MCF 10A (cell line): ENCODE measurements at regions of chr5 and their contacts with region 1.

Region 1: DNA sequence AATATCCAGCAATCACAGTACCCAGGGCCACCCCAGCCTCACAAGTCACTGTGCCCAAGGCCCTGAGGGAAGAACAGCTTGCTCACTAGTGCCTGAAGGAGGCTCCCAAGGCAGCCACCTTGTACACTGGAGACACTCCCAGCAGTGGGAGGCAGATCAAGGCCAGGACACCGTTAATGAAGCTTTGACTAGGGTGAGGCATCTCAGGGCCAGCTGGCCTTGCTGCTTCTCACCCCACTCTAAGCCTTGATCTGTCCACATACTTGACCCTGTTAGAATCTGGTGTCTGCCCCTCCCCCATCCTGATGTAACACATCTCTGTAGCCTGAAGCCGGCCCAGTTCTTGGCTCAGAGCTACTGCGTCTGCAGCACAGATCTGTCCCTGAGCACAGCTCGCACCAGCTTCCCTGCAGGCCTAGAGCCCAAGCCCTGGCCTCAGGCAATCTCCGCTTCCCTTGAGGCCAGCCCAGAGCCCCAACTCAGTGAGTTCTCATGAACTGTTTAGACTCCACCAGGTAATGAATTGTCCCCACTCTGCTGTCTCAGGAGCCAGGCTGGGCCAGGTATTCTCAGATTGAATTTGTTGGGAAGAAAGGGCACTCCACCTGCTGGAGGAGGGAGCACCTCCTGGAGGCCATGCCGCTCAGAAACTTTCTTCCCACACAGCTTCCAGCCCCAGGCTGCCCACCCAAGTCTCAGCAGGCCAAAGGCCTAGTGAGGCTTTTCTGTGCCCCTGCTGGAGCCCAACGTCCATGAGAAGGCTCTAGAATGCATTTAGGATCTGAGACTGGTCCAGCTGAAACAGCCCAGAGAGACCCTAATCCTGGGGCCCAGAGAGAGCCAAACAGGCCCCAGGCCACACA is 13.5 kb upstream of the JADE2 start:
- DNase-seq: peak; percentile 95
- H3K4me3 Mint-ChIP-seq: peak overlapping the region; percentile 48
- H3K27ac Mint-ChIP-seq: peak overlapping the region; percentile 82
- H3K4me1 Mint-ChIP-seq: peaks cover 54% of the 10 kb centered on the region
- H3K27me3 Mint-ChIP-seq: no peaks in the 10 kb centered on the region
- CTCF ChIP-seq: peak; percentile 61

Region 2: DNA sequence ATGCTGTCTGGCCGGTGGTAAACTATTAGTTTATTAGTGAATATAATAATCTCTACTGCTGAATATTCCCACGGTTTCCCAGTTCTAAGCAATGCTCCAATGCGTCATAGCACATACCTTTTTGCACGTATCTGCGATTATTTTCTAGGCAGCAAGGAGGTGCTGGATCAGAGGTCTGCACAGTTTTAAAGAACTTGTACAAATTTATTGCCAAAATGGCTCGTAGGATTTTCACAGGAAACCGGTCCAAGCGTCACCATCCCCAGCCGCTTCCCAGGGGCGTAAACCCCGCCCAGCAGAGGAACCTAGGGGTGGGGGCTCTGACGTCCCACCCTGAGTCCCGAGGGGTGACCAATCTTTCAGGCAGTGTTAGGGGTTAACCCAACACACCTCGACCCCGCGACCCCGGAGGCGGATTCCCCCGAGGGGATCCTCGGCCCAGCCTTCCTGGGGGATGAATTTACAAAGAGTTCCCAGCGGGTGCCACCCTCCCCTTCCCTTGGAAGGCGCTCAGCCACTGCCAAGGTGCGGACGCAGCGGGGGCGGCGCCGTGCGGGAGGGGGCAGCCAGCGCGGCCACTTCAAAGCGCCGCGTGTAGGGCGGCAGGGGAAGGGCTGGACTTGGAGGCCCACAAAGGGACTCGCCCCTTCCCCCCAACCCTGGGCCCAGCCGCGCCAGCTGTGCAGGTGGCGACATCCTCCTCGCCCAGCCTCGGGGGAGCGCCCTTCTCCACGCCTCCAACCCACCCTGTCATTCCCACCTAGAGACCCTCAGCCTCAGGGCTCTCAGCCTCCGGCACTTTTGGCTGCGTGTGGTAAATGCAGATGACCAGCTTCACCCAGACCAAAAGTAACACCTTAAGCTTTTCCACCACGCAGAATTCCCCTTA is 441.1 kb before region 1 on chr5:
- CTCF ChIA-PET with region 1: no interaction called
- POLR2A ChIA-PET with region 1: no interaction called
- intact Hi-C with region 1: no loop called
- DNase-seq: no peak
- H3K4me3 Mint-ChIP-seq: no peak overlapping the region
- H3K27ac Mint-ChIP-seq: no peak overlapping the region
- H3K4me1 Mint-ChIP-seq: no peaks in the 10 kb centered on the region
- H3K27me3 Mint-ChIP-seq: no peaks in the 10 kb centered on the region
- CTCF ChIP-seq: no peak

Region 3: DNA sequence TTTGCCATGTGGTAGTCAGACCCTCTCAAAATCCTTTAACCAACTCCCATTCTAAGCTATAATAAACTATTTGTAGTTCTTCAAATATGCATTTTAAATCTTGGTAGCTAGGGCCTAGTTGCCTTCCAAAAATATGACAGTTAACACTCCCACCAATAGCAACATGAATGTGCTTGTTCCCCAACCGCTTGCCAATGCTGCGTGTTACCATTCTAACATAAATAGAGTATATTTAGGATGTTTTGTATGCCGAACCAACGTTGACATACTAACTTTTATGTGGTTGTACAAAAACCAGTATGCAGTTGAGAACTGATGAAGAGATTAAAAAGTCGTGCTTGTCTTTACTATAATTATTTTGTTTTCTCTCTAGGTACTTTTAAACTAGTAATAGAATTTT is 131.7 kb before region 1 on chr5:
- CTCF ChIA-PET with region 1: interaction called, 10 read pairs
- POLR2A ChIA-PET with region 1: interaction called, 4 read pairs
- intact Hi-C with region 1: no loop called
- DNase-seq: no peak
- H3K4me3 Mint-ChIP-seq: no peak overlapping the region
- H3K27ac Mint-ChIP-seq: no peak overlapping the region
- H3K4me1 Mint-ChIP-seq: no peaks in the 10 kb centered on the region
- H3K27me3 Mint-ChIP-seq: no peaks in the 10 kb centered on the region
- CTCF ChIP-seq: no peak

Region 4: GRCh38 chr5:134436523-134437339 is 75.3 kb before region 1 on chr5:
- CTCF ChIA-PET with region 1: interaction called, 23 read pairs
- POLR2A ChIA-PET with region 1: interaction called, 85 read pairs
- intact Hi-C with region 1: loop called (anchors 1 kb)
- DNase-seq: peak; percentile 96
- H3K4me3 Mint-ChIP-seq: peak overlapping the region; percentile 63
- H3K27ac Mint-ChIP-seq: peak overlapping the region; percentile 98
- H3K4me1 Mint-ChIP-seq: peaks cover 72% of the 10 kb centered on the region
- H3K27me3 Mint-ChIP-seq: no peaks in the 10 kb centered on the region
- CTCF ChIP-seq: no peak

Region 5: DNA sequence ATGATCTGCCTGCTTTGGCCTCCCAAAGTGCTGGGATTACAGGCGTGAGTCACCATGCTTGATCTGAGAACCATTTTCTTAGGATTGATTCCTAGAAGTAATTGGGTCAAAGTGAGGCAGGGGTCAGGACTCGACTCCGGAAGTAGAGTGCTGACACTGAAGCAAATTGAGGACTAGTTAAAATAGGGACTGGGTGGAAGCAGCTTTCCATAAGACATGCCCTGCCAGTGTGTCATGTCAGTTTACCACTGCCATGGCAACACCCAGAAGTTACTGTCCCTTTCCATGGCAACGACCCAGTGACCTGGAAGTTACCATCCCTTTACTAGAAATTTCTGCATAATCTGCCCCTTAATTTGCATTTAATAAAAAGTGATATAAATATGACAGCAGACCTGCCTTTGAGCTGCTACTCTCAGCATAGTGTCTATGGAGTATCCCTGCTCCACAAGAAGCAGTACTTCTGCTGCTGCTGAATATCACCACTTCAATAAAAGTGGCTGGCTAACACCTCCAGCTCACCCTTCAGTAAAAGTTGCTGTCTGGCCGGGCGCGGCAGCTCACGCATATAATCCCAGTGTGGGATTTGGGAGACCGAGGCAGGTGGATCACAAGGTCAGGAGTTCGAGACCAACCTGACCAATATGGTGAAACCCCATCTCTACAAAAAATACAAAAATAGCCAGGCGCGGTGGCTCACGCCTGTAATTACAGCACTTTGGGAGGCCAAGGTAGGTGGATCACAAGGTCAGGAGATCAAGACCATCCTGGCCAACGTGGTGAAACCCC is 34.4 kb before region 1 on chr5:
- CTCF ChIA-PET with region 1: interaction called, 8 read pairs
- POLR2A ChIA-PET with region 1: interaction called, 11 read pairs
- intact Hi-C with region 1: no loop called
- DNase-seq: peak; percentile 17
- H3K4me3 Mint-ChIP-seq: no peak overlapping the region
- H3K27ac Mint-ChIP-seq: no peak overlapping the region
- H3K4me1 Mint-ChIP-seq: no peaks in the 10 kb centered on the region
- H3K27me3 Mint-ChIP-seq: no peaks in the 10 kb centered on the region
- CTCF ChIP-seq: no peak

Region 6: GRCh38 chr5:134527146-134527960 is 15.3 kb after region 1 on chr5:
- CTCF ChIA-PET with region 1: interaction called, 42 read pairs
- POLR2A ChIA-PET with region 1: interaction called, 300 read pairs
- intact Hi-C with region 1: loop called (anchors 1 kb)
- DNase-seq: peak; percentile 93
- H3K4me3 Mint-ChIP-seq: peak overlapping the region; percentile 91
- H3K27ac Mint-ChIP-seq: peak overlapping the region; percentile 49
- H3K4me1 Mint-ChIP-seq: peaks cover 50% of the 10 kb centered on the region
- H3K27me3 Mint-ChIP-seq: no peaks in the 10 kb centered on the region
- CTCF ChIP-seq: peak; percentile 94